Psoas muscle (tissue), 8 donors: ENCODE measurements at regions of chr1 and their contacts with region 1.

Region 1: GRCh38 chr1:212477014-212477679 is 44.4 kb downstream of the NENF start:
- DNase-seq: peak; percentile 75 to 82
- ATAC-seq: peak; percentile 96 to 99 (median 97)
- H3K4me3 ChIP-seq: no peak overlapping the region
- H3K27ac ChIP-seq: no peak overlapping the region
- H3K4me1 ChIP-seq: peaks cover 6% of the 10 kb centered on the region
- H3K27me3 ChIP-seq: no peaks in the 10 kb centered on the region
- CTCF ChIP-seq: peak; percentile 89

Region 2: DNA sequence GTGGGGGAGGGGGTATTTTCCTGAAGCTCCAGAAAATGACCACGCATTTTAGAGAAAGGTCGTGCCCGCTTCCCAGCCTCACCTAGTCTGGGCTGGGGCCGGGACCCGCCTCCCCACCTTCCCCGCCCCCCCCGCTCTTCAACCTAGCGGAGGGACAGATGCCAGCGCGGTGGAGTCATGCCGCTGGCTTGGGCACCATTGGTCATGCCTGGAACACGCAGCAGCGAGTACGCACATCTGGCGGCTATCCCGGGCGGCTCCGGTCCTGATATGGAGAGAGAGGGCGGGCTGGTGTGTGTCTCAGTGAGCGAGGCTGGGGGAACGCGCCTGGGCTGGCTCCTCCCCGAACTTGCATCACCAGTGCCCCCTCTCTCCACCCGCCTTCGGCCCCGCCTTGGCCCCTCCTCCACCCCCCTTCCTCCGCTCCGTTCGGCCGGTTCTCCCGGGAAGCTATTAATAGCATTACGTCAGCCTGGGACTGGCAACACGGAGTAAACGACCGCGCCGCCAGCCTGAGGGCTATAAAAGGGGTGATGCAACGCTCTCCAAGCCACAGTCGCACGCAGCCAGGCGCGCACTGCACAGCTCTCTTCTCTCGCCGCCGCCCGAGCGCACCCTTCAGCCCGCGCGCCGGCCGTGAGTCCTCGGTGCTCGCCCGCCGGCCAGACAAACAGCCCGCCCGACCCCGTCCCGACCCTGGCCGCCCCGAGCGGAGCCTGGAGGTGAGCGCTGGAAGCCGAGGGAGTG is 131.2 kb after region 1 on chr1 and contains the start of gene ATF3:
- intact Hi-C with region 1: loop called (anchors 5 to 10 kb)
- DNase-seq: peak; percentile 100
- ATAC-seq: peak; percentile 93 to 97 (median 94)
- H3K4me3 ChIP-seq: peak within 1 kb of the TSS; percentile 81
- H3K27ac ChIP-seq: peak within 1 kb of the TSS; percentile 87
- H3K4me1 ChIP-seq: peaks cover 24% of the 10 kb centered on the region
- H3K27me3 ChIP-seq: peaks cover 0 to 38% (median 13%) of the 10 kb centered on the region in 3 donors
- CTCF ChIP-seq: no peak
- total RNA-seq, gene ATF3: 13.5 to 51.3 (median 26.3) TPM

Region 3: DNA sequence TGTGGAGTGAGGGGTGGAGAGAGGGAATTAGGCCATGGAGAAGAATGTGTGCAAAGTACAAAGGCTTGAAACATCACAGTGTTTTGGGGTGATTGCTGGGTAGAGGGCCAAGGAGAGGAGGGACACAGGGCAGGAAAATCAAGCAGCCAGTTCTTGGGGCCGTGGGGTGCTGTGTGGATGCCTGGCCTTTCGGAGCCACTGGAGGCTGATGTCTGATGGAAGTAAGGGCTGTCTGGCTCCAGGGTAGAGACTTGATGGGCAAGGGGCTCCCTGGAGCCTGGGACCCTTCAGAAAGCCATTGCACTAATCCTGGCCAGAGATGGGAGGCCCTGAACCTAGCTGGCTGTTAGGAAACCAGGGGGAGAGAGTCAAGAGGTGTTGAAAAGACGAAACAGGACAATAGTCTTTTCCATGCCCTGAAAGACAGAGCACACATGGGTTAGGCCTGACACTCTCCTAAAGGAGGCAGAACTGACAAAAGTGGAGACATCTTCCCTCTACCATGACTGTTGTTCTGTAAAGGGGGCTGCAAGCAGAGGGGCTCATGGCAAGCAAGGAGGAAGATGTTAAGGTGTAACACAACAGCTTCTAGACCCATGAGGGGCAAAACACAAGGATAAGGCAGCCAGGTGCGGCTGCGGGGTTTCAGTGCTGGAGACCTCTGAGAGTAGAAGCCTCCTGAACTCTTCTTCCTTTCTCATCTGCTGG is 152.5 kb after region 1 on chr1:
- intact Hi-C with region 1: loop called (anchors 2 to 5 kb)
- DNase-seq: no peak
- ATAC-seq: no peak
- H3K4me3 ChIP-seq: no peak overlapping the region
- H3K27ac ChIP-seq: no peak overlapping the region
- H3K4me1 ChIP-seq: no peaks in the 10 kb centered on the region
- H3K27me3 ChIP-seq: peaks cover 0 to 8% (median 0%) of the 10 kb centered on the region in 3 donors
- CTCF ChIP-seq: no peak

Region 4: GRCh38 chr1:212782422-212783154 is 305.4 kb after region 1 on chr1:
- intact Hi-C with region 1: loop called in 1 of 2 experiments (anchors 5 kb)
- DNase-seq: no peak
- ATAC-seq: peak in 2 of 4 donors; percentile 27 to 63
- H3K4me3 ChIP-seq: no peak overlapping the region
- H3K27ac ChIP-seq: no peak overlapping the region
- H3K4me1 ChIP-seq: no peaks in the 10 kb centered on the region
- H3K27me3 ChIP-seq: no peaks in the 10 kb centered on the region
- CTCF ChIP-seq: peak; percentile 56

Region 5: GRCh38 chr1:212981571-212982328 is 504.6 kb after region 1 on chr1:
- intact Hi-C with region 1: loop called in 1 of 2 experiments (anchors 10 kb)
- DNase-seq: peak in 1 of 2 donors; percentile 61
- ATAC-seq: peak; percentile 18 to 68 (median 54)
- H3K4me3 ChIP-seq: no peak overlapping the region
- H3K27ac ChIP-seq: peak overlapping the region; percentile 86
- H3K4me1 ChIP-seq: peaks cover 45% of the 10 kb centered on the region
- H3K27me3 ChIP-seq: no peaks in the 10 kb centered on the region
- CTCF ChIP-seq: no peak